HCT116 (cell line): ENCODE measurements at regions of chr9 and their contacts with region 1.

Region 1: GRCh38 chr9:17531642-17532254 is 47.1 kb upstream of the SH3GL2 start:
- DNase-seq: peak; percentile 10
- ATAC-seq: peak; percentile 65; the same call in 1 of the 2 replicates
- H3K4me3 ChIP-seq: no peak overlapping the region
- H3K27ac ChIP-seq: no peak overlapping the region
- H3K4me1 ChIP-seq: no peaks in the 10 kb centered on the region
- H3K27me3 ChIP-seq: no peaks in the 10 kb centered on the region
- CTCF ChIP-seq: peak; percentile 48 to 65 (median 62)
- POLR2A ChIP-seq: no peak
- RAD21 ChIP-seq: peak; percentile 64

Region 2: GRCh38 chr9:17802249-17802857 is 270.6 kb after region 1 on chr9:
- CTCF ChIA-PET with region 1: interaction called, 5 read pairs
- POLR2A ChIA-PET with region 1: no interaction called
- RAD21 ChIA-PET with region 1: no interaction called
- intact Hi-C with region 1: loop called (anchors 2 kb)
- DNase-seq: no peak
- ATAC-seq: no peak
- H3K4me3 ChIP-seq: no peak overlapping the region
- H3K27ac ChIP-seq: no peak overlapping the region
- H3K4me1 ChIP-seq: no peaks in the 10 kb centered on the region
- H3K27me3 ChIP-seq: no peaks in the 10 kb centered on the region
- CTCF ChIP-seq: peak in 2 of 3 experiments; percentile 30 to 51; a peak in 3 of 6 replicates
- POLR2A ChIP-seq: no peak
- RAD21 ChIP-seq: peak; percentile 33

Region 3: GRCh38 chr9:18208154-18209059 is 676.7 kb after region 1 on chr9:
- CTCF ChIA-PET with region 1: no interaction called
- POLR2A ChIA-PET with region 1: no interaction called
- RAD21 ChIA-PET with region 1: no interaction called
- intact Hi-C with region 1: loop called (anchors 5 kb)
- DNase-seq: no peak
- ATAC-seq: no peak
- H3K4me3 ChIP-seq: no peak overlapping the region
- H3K27ac ChIP-seq: no peak overlapping the region
- H3K4me1 ChIP-seq: no peaks in the 10 kb centered on the region
- H3K27me3 ChIP-seq: no peaks in the 10 kb centered on the region
- CTCF ChIP-seq: peak in 2 of 3 experiments; percentile 6 to 31; a peak in 2 of 6 replicates
- POLR2A ChIP-seq: no peak
- RAD21 ChIP-seq: peak; percentile 19; the same call in 1 of the 2 replicates

Region 4: DNA sequence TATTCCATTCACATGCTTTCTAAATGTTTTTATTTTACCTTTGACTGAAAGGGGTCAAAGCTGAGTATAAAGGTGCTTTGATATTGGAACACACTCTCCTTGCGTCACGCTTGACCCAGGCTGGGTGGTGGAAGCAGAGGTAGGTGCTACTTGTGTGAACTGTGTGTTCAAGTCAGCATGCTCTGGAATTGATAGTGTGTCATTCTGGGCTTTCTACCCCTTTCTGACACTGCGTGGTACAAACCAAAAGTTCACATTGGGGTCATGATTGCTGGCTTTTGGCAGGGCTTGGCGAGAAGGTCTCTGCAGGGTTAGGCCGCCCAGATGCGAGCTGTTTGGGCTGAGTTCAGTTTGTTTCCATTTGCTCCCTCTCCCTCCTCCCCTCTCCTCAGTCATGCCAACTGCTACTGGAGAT is 1074.0 kb after region 1 on chr9:
- CTCF ChIA-PET with region 1: no interaction called
- POLR2A ChIA-PET with region 1: no interaction called
- RAD21 ChIA-PET with region 1: no interaction called
- intact Hi-C with region 1: no loop called
- DNase-seq: no peak
- ATAC-seq: no peak
- H3K4me3 ChIP-seq: no peak overlapping the region
- H3K27ac ChIP-seq: no peak overlapping the region
- H3K4me1 ChIP-seq: no peaks in the 10 kb centered on the region
- H3K27me3 ChIP-seq: no peaks in the 10 kb centered on the region
- CTCF ChIP-seq: no peak
- POLR2A ChIP-seq: no peak
- RAD21 ChIP-seq: no peak

Region 5: GRCh38 chr9:18824095-18824666 is 1292.4 kb after region 1 on chr9:
- CTCF ChIA-PET with region 1: no interaction called
- POLR2A ChIA-PET with region 1: no interaction called
- RAD21 ChIA-PET with region 1: no interaction called
- intact Hi-C with region 1: loop called (anchors 10 kb)
- DNase-seq: no peak
- ATAC-seq: peak; percentile 78
- H3K4me3 ChIP-seq: no peak overlapping the region
- H3K27ac ChIP-seq: no peak overlapping the region
- H3K4me1 ChIP-seq: peaks cover 5 to 9% of the 10 kb centered on the region in 2 experiments; a peak in 3 of 4 replicates
- H3K27me3 ChIP-seq: 0 out of 2 replicates have a peak, but pooled peaks cover 5% of the 10 kb centered on the region
- CTCF ChIP-seq: peak; percentile 14 to 49 (median 49); a peak in 4 of 6 replicates
- POLR2A ChIP-seq: no peak
- RAD21 ChIP-seq: peak; percentile 60

Region 6: DNA sequence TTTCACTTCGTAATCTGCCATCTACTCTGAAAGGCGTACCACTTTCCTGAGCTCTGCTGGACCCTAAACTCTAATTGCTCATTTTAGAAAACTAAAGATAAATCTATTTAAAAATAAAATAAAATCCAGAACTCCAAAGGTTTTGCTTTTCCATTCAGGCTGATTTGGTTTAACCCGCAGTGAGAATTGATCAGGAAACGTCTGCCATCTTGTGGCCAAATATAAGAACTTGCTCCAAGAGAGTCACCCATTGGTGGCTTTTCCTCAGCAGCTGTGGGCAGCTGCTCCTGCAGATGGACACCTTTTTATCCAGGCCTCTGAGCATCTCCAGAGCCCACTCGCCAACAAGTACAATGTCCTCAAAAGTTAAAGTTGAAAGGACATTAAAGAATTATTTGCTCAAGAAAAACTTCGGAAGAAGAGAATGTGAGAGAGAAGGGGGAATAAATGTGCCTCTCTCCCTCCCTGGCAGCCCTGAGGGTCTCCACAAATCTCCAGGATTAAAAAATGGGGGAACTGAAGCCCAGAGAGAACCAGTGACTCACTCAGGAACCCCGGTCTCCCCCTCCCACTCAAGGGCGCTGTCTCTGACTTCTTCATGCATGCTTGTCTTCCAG is 1497.2 kb after region 1 on chr9:
- CTCF ChIA-PET with region 1: no interaction called
- POLR2A ChIA-PET with region 1: no interaction called
- RAD21 ChIA-PET with region 1: no interaction called
- intact Hi-C with region 1: loop called (anchors 1 kb)
- DNase-seq: peak; percentile 52
- ATAC-seq: peak; percentile 92
- H3K4me3 ChIP-seq: no peak overlapping the region
- H3K27ac ChIP-seq: no peak overlapping the region
- H3K4me1 ChIP-seq: no peaks in the 10 kb centered on the region
- H3K27me3 ChIP-seq: no peaks in the 10 kb centered on the region
- CTCF ChIP-seq: peak; percentile 55 to 64 (median 61); a peak in 5 of 6 replicates
- POLR2A ChIP-seq: no peak
- RAD21 ChIP-seq: peak; percentile 72